PC-9 (cell line): ENCODE measurements at regions of chr6 and their contacts with region 1.

Region 1: GRCh38 chr6:115817161-115817560 is 243.5 kb downstream of the FRK start:
- DNase-seq: no peak
- H3K4me3 ChIP-seq: no peak overlapping the region
- H3K27ac ChIP-seq: no peak overlapping the region
- H3K4me1 ChIP-seq: no peaks in the 10 kb centered on the region
- H3K27me3 ChIP-seq: no peaks in the 10 kb centered on the region
- CTCF ChIP-seq: no peak

Region 2: DNA sequence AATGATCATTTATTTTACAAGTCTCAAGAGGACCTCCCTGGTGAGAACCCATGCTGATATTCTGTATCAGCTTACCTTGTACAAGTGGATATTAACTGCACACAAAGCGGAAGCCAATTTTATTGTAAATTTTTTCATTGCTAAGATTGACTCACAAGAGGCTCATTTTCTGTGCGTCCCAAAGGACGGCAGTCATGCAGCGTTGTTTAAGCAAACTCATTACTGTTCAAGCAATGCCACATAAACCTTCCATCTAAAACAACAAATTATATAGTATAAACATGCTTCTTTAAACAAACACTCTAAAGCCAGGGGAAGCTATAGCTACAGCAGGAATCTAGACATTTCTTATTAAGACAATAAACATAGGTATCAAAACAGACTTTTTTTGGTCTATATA is 331.8 kb before region 1 on chr6:
- CTCF ChIA-PET with region 1: no interaction called
- POLR2A ChIA-PET with region 1: no interaction called
- intact Hi-C with region 1: no loop called
- DNase-seq: no peak
- H3K4me3 ChIP-seq: no peak overlapping the region
- H3K27ac ChIP-seq: no peak overlapping the region
- H3K4me1 ChIP-seq: no peaks in the 10 kb centered on the region
- H3K27me3 ChIP-seq: no peaks in the 10 kb centered on the region
- CTCF ChIP-seq: no peak

Region 3: GRCh38 chr6:115667478-115668026 is 149.6 kb before region 1 on chr6:
- CTCF ChIA-PET with region 1: no interaction called
- POLR2A ChIA-PET with region 1: no interaction called
- intact Hi-C with region 1: loop called (anchors 10 kb)
- DNase-seq: no peak
- H3K4me3 ChIP-seq: no peak overlapping the region
- H3K27ac ChIP-seq: no peak overlapping the region
- H3K4me1 ChIP-seq: no peaks in the 10 kb centered on the region
- H3K27me3 ChIP-seq: no peaks in the 10 kb centered on the region
- CTCF ChIP-seq: no peak